B cell (primary cell): ENCODE measurements at regions of chr4 and their contacts with region 1.

Region 1: DNA sequence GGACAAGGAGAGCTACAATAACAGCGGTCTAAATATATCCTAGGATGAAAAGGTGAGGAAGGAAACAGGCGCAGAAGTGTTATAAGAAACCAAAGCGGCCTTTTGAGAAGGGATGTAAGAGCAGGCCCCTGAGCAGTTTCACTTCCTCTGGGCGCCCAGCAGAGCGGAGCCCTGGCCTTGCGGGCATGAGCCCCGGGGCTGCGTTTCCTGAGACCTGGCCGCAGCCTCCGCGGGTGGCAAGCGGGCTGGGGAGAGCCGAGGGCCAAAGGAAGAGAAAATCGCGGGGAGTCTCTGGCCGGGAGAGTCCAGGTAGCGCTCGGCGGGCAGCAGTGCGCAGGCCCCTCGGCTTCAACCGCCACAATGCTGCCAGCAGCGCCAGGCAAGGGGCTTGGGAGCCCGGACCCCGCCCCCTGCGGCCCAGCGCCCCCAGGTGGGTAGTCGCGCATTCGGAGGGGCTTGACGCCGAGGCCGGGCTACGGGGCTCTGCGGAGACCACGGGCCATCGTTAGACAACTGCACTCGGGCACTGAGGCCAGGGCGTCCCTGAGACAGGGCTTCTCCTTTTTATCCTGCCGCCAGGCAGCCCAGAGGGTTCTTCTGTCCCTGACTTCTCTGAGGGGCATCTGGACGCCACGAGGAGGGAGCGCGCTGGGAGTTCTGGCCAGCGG is at the start of gene BANK1:
- DNase-seq: peak; percentile 95
- ATAC-seq: peak; percentile 93
- H3K4me3 ChIP-seq: peak within 1 kb of the TSS; percentile 65 to 99 (median 83)
- H3K4me3 Mint-ChIP-seq: peak within 1 kb of the TSS; percentile 90
- H3K27ac ChIP-seq: peak within 1 kb of the TSS; percentile 91 to 95
- H3K27ac Mint-ChIP-seq: peak within 1 kb of the TSS; percentile 98
- H3K4me1 ChIP-seq: peaks cover 12 to 47% of the 10 kb centered on the region in 2 donors
- H3K4me1 Mint-ChIP-seq: peaks cover 53% of the 10 kb centered on the region
- H3K27me3 ChIP-seq: no peaks in the 10 kb centered on the region
- H3K27me3 Mint-ChIP-seq: no peaks in the 10 kb centered on the region
- CTCF ChIP-seq: peak; percentile 53
- total RNA-seq, gene BANK1: 354 and 368 TPM in 2 replicates

Region 2: GRCh38 chr4:101169044-101170014 is 621.3 kb before region 1 on chr4:
- CTCF ChIA-PET with region 1: interaction called, 4 read pairs
- POLR2A ChIA-PET with region 1: no interaction called
- intact Hi-C with region 1: loop called (anchors 10 kb)
- DNase-seq: peak; percentile 76
- ATAC-seq: peak; percentile 96
- H3K4me3 ChIP-seq: no peak overlapping the region
- H3K4me3 Mint-ChIP-seq: no peak overlapping the region
- H3K27ac ChIP-seq: no peak overlapping the region
- H3K27ac Mint-ChIP-seq: no peak overlapping the region
- H3K4me1 ChIP-seq: peaks cover 7 to 18% of the 10 kb centered on the region in 2 donors
- H3K4me1 Mint-ChIP-seq: peaks cover 27% of the 10 kb centered on the region
- H3K27me3 ChIP-seq: no peaks in the 10 kb centered on the region
- H3K27me3 Mint-ChIP-seq: no peaks in the 10 kb centered on the region
- CTCF ChIP-seq: peak; percentile 77

Region 3: GRCh38 chr4:101630319-101630986 is 160.2 kb before region 1 on chr4:
- CTCF ChIA-PET with region 1: no interaction called
- POLR2A ChIA-PET with region 1: no interaction called
- intact Hi-C with region 1: no loop called
- DNase-seq: no peak
- ATAC-seq: no peak
- H3K4me3 ChIP-seq: no peak overlapping the region
- H3K4me3 Mint-ChIP-seq: peak overlapping the region; percentile 49
- H3K27ac ChIP-seq: no peak overlapping the region
- H3K27ac Mint-ChIP-seq: no peak overlapping the region
- H3K4me1 ChIP-seq: peaks cover 0 to 6% of the 10 kb centered on the region in 2 donors
- H3K4me1 Mint-ChIP-seq: peaks cover 9% of the 10 kb centered on the region
- H3K27me3 ChIP-seq: no peaks in the 10 kb centered on the region
- H3K27me3 Mint-ChIP-seq: no peaks in the 10 kb centered on the region
- CTCF ChIP-seq: no peak

Region 4: DNA sequence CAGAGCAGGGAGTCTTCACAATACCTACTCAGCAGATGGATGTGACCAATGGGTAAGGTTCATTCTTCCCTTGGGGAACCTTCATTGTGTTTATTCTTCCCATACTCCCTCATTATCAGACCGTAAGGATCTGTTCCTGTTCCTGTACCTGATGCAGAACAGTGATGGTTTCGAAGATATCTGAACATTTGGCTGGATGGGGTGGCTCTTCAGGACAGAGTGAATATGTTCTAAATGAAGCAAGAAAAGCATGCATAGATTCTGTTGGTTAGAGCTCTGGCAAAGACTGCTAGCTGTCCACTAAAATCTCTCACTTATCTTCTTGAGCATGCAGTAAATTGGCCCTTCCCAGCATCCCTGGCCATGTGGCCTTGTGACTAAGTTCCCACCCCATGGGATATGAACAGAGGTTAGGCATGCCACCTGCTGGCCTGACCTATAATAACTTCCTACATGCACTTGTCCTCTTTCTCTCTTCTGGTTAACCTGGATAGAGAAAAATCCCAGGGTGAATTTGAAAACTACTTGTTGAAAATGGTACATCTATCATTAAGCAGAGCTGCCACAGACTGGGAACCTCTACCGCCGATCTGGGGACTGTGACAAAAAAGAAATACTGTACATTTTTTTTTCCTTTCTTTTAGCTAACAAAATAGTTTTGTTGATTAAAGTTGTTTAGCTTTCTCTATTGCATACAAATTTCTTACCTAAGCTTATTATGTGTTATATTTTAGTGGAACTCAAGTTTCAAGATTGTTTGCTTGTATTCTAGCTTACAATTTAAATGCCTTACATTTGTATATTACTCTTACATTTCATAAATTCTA is 60.2 kb before region 1 on chr4:
- CTCF ChIA-PET with region 1: interaction called, 4 read pairs
- POLR2A ChIA-PET with region 1: no interaction called
- intact Hi-C with region 1: loop called (anchors 5 kb)
- DNase-seq: peak; percentile 73
- ATAC-seq: peak; percentile 90
- H3K4me3 ChIP-seq: no peak overlapping the region
- H3K4me3 Mint-ChIP-seq: no peak overlapping the region
- H3K27ac ChIP-seq: no peak overlapping the region
- H3K27ac Mint-ChIP-seq: peak overlapping the region; percentile 13
- H3K4me1 ChIP-seq: peaks cover 6 to 9% of the 10 kb centered on the region in 2 donors
- H3K4me1 Mint-ChIP-seq: peaks cover 14% of the 10 kb centered on the region
- H3K27me3 ChIP-seq: no peaks in the 10 kb centered on the region
- H3K27me3 Mint-ChIP-seq: no peaks in the 10 kb centered on the region
- CTCF ChIP-seq: peak; percentile 80

Region 5: GRCh38 chr4:101806914-101807313 is 16.3 kb after region 1 on chr4:
- CTCF ChIA-PET with region 1: interaction called, 8 read pairs
- POLR2A ChIA-PET with region 1: interaction called, 45 read pairs
- intact Hi-C with region 1: loop called (anchors 1 kb)
- DNase-seq: peak; percentile 95
- ATAC-seq: peak; percentile 91
- H3K4me3 ChIP-seq: peak overlapping the region; percentile 13 to 42 (median 38)
- H3K4me3 Mint-ChIP-seq: peak overlapping the region; percentile 81
- H3K27ac ChIP-seq: peak overlapping the region; percentile 94 to 99
- H3K27ac Mint-ChIP-seq: peak overlapping the region; percentile 97
- H3K4me1 ChIP-seq: peaks cover 73 to 87% of the 10 kb centered on the region in 2 donors
- H3K4me1 Mint-ChIP-seq: peaks cover 77% of the 10 kb centered on the region
- H3K27me3 ChIP-seq: no peaks in the 10 kb centered on the region
- H3K27me3 Mint-ChIP-seq: no peaks in the 10 kb centered on the region
- CTCF ChIP-seq: peak; percentile 34

Region 6: DNA sequence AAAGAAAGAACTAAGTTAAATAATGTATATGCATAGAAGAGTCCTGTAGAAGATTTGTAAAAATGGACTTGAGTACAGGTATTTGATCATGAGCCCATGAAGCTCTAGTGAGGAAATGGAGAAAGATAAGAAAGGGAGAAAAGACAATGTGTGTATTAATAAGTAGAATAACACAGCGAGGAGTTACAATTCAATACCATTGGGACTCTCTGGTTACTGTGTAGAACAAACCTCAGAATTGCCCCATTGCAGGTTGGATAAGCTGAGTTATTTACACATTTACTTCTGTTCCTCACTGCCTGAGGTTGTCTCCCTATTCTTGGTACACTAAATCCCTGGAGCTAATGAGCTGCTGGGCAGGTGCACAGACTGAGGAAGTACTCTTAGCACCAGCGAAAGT is 33.2 kb after region 1 on chr4:
- CTCF ChIA-PET with region 1: no interaction called
- POLR2A ChIA-PET with region 1: no interaction called
- intact Hi-C with region 1: loop called (anchors 5 kb)
- DNase-seq: no peak
- ATAC-seq: peak; percentile 52
- H3K4me3 ChIP-seq: peak overlapping the region in 2 of 5 experiments; percentile 3 to 41
- H3K4me3 Mint-ChIP-seq: peak overlapping the region; percentile 53
- H3K27ac ChIP-seq: peak overlapping the region in 1 of 2 donors; percentile 71
- H3K27ac Mint-ChIP-seq: peak overlapping the region; percentile 87
- H3K4me1 ChIP-seq: peaks cover 45 to 67% of the 10 kb centered on the region in 2 donors
- H3K4me1 Mint-ChIP-seq: peaks cover 71% of the 10 kb centered on the region
- H3K27me3 ChIP-seq: no peaks in the 10 kb centered on the region
- H3K27me3 Mint-ChIP-seq: no peaks in the 10 kb centered on the region
- CTCF ChIP-seq: no peak

Region 7: DNA sequence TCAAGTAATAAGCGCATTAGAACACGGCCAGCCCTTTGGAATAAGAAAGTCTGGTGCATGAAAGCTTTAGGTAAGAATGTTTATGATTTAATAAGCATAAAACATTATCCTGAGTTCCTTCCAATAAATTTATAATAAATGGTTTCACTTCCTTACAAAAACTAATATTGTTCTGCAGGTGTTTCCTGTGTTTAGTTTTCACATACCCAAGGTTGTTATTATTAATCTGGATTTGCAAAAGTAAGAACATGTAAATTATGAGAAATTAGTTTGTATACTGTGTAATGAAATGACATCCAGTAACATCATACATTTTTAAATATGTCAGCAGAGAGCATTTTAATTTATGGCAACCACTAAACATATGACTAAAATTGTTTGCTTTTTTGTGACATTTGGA is 71.9 kb after region 1 on chr4:
- CTCF ChIA-PET with region 1: no interaction called
- POLR2A ChIA-PET with region 1: no interaction called
- intact Hi-C with region 1: loop called (anchors 2 kb)
- DNase-seq: peak; percentile 68
- ATAC-seq: peak; percentile 67
- H3K4me3 ChIP-seq: peak overlapping the region in 2 of 5 experiments; percentile 27 to 45
- H3K4me3 Mint-ChIP-seq: peak overlapping the region; percentile 39
- H3K27ac ChIP-seq: peak overlapping the region; percentile 74
- H3K27ac Mint-ChIP-seq: peak overlapping the region; percentile 75
- H3K4me1 ChIP-seq: peaks cover 53 to 77% of the 10 kb centered on the region in 2 donors
- H3K4me1 Mint-ChIP-seq: peaks cover 65% of the 10 kb centered on the region
- H3K27me3 ChIP-seq: no peaks in the 10 kb centered on the region
- H3K27me3 Mint-ChIP-seq: no peaks in the 10 kb centered on the region
- CTCF ChIP-seq: no peak

Region 8: GRCh38 chr4:101953949-101954348 is 163.3 kb after region 1 on chr4:
- CTCF ChIA-PET with region 1: no interaction called
- POLR2A ChIA-PET with region 1: no interaction called
- intact Hi-C with region 1: no loop called
- DNase-seq: no peak
- ATAC-seq: no peak
- H3K4me3 ChIP-seq: no peak overlapping the region
- H3K4me3 Mint-ChIP-seq: no peak overlapping the region
- H3K27ac ChIP-seq: peak overlapping the region in 1 of 2 donors; percentile 59
- H3K27ac Mint-ChIP-seq: peak overlapping the region; percentile 57
- H3K4me1 ChIP-seq: no peaks in the 10 kb centered on the region
- H3K4me1 Mint-ChIP-seq: peaks cover 47% of the 10 kb centered on the region
- H3K27me3 ChIP-seq: no peaks in the 10 kb centered on the region
- H3K27me3 Mint-ChIP-seq: no peaks in the 10 kb centered on the region
- CTCF ChIP-seq: no peak